MCF 10A (cell line): ENCODE measurements at regions of chr4 and their contacts with region 1.

Region 1: GRCh38 chr4:55609393-55609866 is 17.4 kb upstream of the PDCL2 start:
- DNase-seq: peak; percentile 94
- H3K4me3 Mint-ChIP-seq: peak overlapping the region; percentile 70
- H3K27ac Mint-ChIP-seq: peak overlapping the region; percentile 97
- H3K4me1 Mint-ChIP-seq: peaks cover 25% of the 10 kb centered on the region
- H3K27me3 Mint-ChIP-seq: no peaks in the 10 kb centered on the region
- CTCF ChIP-seq: no peak

Region 2: DNA sequence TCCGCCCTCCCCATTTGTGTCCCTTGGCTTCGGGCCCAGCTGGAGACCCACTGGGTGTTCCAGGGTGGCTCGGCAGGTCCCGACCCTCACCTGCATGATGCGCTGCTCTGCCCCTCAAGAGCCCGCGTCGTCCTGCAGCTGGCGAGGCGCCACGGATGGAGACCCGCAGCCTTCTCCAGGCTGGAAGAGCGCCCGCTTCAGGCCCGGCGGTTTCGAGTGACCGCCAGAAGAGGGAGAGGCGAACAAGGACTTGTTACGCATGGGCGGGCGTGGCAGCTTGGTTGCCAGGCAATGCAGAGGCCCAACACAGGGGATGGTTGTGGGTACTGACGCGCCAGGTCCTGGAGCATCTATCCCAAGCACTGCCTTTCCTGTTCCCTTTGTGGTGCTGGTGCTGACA is 17.4 kb before region 1 on chr4 and contains the start of gene PDCL2:
- CTCF ChIA-PET with region 1: interaction called, 3 read pairs
- POLR2A ChIA-PET with region 1: interaction called, 10 read pairs
- intact Hi-C with region 1: no loop called
- DNase-seq: no peak
- H3K4me3 Mint-ChIP-seq: no peak within 1 kb of the TSS
- H3K27ac Mint-ChIP-seq: no peak within 1 kb of the TSS
- H3K4me1 Mint-ChIP-seq: no peaks in the 10 kb centered on the region
- H3K27me3 Mint-ChIP-seq: no peaks in the 10 kb centered on the region
- CTCF ChIP-seq: no peak
- total RNA-seq, gene PDCL2: not detected in 2 replicates

Region 3: DNA sequence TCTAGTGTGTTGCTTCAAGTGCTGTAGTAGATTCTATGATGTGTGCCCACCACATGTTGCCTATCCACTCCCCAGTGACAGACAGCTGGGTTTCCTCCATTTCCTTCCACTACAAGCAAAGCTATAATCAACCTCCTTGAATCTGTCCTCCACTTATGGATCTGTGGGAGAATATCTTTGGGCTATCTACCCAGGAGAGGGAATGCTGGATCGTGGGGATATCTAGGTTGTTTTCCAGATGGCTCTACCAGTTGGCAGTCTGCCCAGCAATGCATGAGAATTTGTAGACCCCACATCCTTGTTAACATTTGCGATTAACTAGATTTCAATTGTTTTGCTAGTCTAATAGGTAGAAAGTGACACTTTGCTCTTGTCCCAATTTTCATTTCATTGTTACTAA is 16.4 kb after region 1 on chr4:
- CTCF ChIA-PET with region 1: interaction called, 6 read pairs
- POLR2A ChIA-PET with region 1: interaction called, 20 read pairs
- intact Hi-C with region 1: no loop called
- DNase-seq: no peak
- H3K4me3 Mint-ChIP-seq: no peak overlapping the region
- H3K27ac Mint-ChIP-seq: no peak overlapping the region
- H3K4me1 Mint-ChIP-seq: no peaks in the 10 kb centered on the region
- H3K27me3 Mint-ChIP-seq: no peaks in the 10 kb centered on the region
- CTCF ChIP-seq: no peak

Region 4: DNA sequence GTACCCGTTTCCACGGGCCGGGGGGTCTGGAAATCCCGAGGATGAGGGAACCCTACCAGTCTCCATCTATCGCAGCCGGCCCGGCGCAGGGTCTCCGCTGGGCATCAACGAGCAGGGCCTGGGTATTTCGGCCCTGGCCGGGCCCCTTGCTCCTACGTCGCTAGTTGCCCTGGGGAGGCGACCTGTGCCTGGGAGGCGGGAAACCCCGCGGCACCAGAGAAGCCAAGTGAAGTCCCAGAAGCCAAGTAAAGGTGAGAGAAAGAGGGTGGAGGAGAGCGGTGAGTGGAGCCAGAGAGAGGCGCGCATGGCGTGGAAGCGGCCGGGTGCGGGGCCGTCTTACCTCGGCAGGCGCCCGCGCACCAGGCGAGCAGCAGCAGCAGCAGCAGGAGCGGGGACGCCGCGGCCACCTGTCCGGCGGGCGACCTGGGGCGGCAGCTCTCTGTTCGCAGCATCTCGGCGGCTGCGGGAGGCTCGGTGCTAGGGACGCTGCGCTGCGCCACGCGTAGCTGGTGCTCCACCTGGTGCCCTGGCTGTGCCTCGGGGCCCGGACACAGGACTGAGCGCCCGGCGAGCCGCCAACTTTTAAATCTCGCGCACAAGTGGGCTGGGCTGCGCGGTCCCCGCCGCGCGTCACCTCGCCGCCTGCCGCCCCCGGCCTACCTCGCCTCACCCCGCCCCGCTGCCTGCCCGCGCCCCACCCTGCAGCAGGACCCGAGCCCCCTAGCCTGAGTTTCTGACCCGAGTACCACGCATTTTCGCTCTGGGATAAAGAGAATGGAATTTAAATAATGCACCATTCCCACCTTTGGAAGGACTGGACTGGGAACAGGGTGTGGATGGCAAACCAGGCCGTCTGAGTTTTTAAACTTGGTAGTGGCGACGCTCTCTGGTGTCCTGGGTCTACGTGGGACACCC is 26.6 kb after region 1 on chr4 and contains the start of gene NMU:
- CTCF ChIA-PET with region 1: interaction called, 9 read pairs
- POLR2A ChIA-PET with region 1: interaction called, 21 read pairs
- intact Hi-C with region 1: loop called (anchors 2 kb)
- DNase-seq: peak; percentile 82
- H3K4me3 Mint-ChIP-seq: peak within 1 kb of the TSS; percentile 71
- H3K27ac Mint-ChIP-seq: no peak within 1 kb of the TSS
- H3K4me1 Mint-ChIP-seq: peaks cover 23% of the 10 kb centered on the region
- H3K27me3 Mint-ChIP-seq: no peaks in the 10 kb centered on the region
- CTCF ChIP-seq: peak; percentile 17
- total RNA-seq, gene NMU: 4.7 and 8.5 TPM in 2 replicates